ENCODE measurements at regions of chr20 and their contacts with region 1.

Region 1: GRCh38 chr20:58447511-58448391 is 58.7 kb downstream of the VAPB start:
- DNase-seq: peak; percentile 79
- ATAC-seq: peak; percentile 93
- H3K4me3 ChIP-seq: no peak overlapping the region
- H3K27ac ChIP-seq: no peak overlapping the region
- H3K4me1 ChIP-seq: no peaks in the 10 kb centered on the region
- H3K27me3 ChIP-seq: no peaks in the 10 kb centered on the region
- CTCF ChIP-seq: peak; percentile 88
- EP300 ChIP-seq: no peak
- POLR2A ChIP-seq: no peak
- RAD21 ChIP-seq: peak; percentile 88

Region 2: GRCh38 chr20:58236612-58237330 is 211.0 kb before region 1 on chr20:
- CTCF ChIA-PET with region 1: interaction called, 57 read pairs
- POLR2A ChIA-PET with region 1: no interaction called
- in situ Hi-C with region 1: no loop called
- intact Hi-C with region 1: loop called (anchors 1 kb)
- DNase-seq: peak; percentile 52
- ATAC-seq: peak; percentile 93
- H3K4me3 ChIP-seq: peak overlapping the region; percentile 10 to 59 (median 43); a peak in 5 of 6 replicates
- H3K27ac ChIP-seq: no peak overlapping the region
- H3K4me1 ChIP-seq: peaks cover 7% of the 10 kb centered on the region
- H3K27me3 ChIP-seq: peaks cover 0 to 12% of the 10 kb centered on the region in 2 experiments; a peak in 2 of 5 replicates
- CTCF ChIP-seq: peak; percentile 99
- EP300 ChIP-seq: no peak
- POLR2A ChIP-seq: no peak
- RAD21 ChIP-seq: peak; percentile 92

Region 3: GRCh38 chr20:58246346-58246745 is 201.4 kb before region 1 on chr20:
- CTCF ChIA-PET with region 1: interaction called, 43 read pairs
- POLR2A ChIA-PET with region 1: no interaction called
- in situ Hi-C with region 1: loop called (anchors 5 kb)
- intact Hi-C with region 1: loop called (anchors 1 kb)
- DNase-seq: peak; percentile 61
- ATAC-seq: peak; percentile 75
- H3K4me3 ChIP-seq: no peak overlapping the region
- H3K27ac ChIP-seq: no peak overlapping the region
- H3K4me1 ChIP-seq: peaks cover 2% of the 10 kb centered on the region; the same call in 1 of the 2 replicates
- H3K27me3 ChIP-seq: no peaks in the 10 kb centered on the region
- CTCF ChIP-seq: peak; percentile 71
- EP300 ChIP-seq: no peak
- POLR2A ChIP-seq: no peak
- RAD21 ChIP-seq: peak; percentile 32; the same call in 1 of the 2 replicates

Region 4: DNA sequence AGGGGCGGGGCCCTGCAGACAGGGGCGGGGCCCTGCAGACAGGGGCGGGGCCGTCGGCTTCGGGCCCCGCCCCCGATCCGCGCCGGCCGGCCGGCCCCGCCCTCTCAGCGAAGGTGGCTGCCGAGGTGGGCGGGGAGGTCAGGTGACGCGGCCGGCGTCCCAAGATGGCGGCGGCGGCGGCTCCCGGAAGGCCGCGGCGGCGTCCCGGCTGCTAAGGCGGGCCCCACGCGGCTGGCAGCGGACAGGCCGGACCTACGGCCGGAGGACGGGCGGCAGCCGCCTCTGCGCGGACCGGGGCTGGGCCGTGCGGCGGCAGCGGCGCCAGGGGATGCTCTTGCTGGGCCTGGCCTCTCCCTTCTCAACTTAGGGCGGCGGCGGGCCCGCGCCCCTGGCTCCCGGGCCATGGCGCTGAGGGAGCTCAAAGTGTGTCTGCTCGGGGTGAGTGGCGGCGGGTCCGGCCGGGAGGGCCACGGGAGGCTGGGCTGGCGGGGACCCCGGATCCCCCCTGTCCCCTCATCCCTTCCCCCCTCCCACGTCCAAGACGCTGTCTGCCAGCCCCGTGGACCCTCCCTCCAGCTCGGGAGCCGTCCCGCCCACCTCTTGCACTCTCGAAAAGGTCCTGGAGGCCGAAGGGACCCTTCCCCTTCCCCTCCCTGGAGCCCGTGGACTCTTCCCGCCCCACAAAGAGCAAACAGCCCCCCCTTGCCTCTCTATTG is 138.0 kb before region 1 on chr20 and contains the start of gene RAB22A:
- CTCF ChIA-PET with region 1: no interaction called
- POLR2A ChIA-PET with region 1: no interaction called
- in situ Hi-C with region 1: no loop called
- intact Hi-C with region 1: loop called (anchors 2 kb)
- DNase-seq: peak; percentile 56
- ATAC-seq: peak; percentile 82
- H3K4me3 ChIP-seq: peak within 1 kb of the TSS; percentile 98 to 100 (median 99)
- H3K27ac ChIP-seq: peak within 1 kb of the TSS; percentile 65
- H3K4me1 ChIP-seq: peaks cover 40% of the 10 kb centered on the region
- H3K27me3 ChIP-seq: no peaks in the 10 kb centered on the region; a peak in 1 of 5 replicates
- CTCF ChIP-seq: no peak; the same call in 1 of the 2 replicates
- EP300 ChIP-seq: peak; percentile 8 to 37; a peak in 1 of 4 replicates
- POLR2A ChIP-seq: peak; percentile 67 to 72
- RAD21 ChIP-seq: peak; percentile 74
- total RNA-seq, gene RAB22A: 11.2 and 16.2 TPM in 2 replicates